GM12878 (cell line): ENCODE measurements at regions of chr11 and their contacts with region 1.

Region 1: DNA sequence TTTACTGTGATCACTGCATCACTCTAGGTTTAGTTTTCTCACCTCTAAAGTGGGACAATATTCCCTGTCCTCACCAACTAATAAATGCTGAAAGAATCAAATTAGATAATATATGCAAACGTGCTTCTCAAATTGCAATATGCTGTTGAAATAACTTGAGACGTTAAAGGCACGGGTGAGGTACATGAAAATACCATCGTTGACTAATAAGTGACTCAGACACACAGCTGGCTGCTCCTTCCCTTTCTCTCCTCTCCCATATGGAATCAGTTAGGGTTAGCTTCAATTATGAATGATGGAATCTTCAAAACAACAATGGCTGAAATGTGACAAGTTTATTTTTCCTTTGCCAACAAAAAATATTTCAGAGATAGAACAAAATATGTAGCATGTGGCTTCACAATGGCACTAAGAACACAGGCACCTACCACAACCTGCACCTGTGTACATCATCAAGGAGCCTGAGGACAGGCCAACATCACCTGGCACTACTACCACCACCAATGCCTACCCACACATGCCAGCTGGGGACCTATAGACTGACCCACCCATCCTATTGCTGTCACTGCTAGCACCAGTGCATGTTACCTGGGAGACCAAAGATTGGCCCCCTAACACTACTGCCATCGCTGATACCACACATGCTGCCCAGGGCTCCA is 13.7 kb downstream of the GDPD4 start:
- DNase-seq: no peak
- ATAC-seq: no peak
- H3K4me3 ChIP-seq: no peak overlapping the region
- H3K27ac ChIP-seq: no peak overlapping the region
- H3K4me1 ChIP-seq: no peaks in the 10 kb centered on the region
- H3K27me3 ChIP-seq: peaks cover 0 to 3% of the 10 kb centered on the region in 2 experiments; a peak in 2 of 4 replicates
- CTCF ChIP-seq: no peak
- EP300 ChIP-seq: no peak
- POLR2A ChIP-seq: no peak
- RAD21 ChIP-seq: no peak

Region 2: GRCh38 chr11:77340501-77340900 is 52.8 kb after region 1 on chr11:
- CTCF ChIA-PET with region 1: no interaction called
- POLR2A ChIA-PET with region 1: no interaction called
- RAD21 ChIA-PET with region 1: no interaction called
- SMC1A ChIA-PET with region 1: no interaction called
- in situ Hi-C with region 1: loop called (anchors 5 kb)
- intact Hi-C with region 1: no loop called
- DNase-seq: no peak
- ATAC-seq: no peak
- H3K4me3 ChIP-seq: no peak overlapping the region
- H3K27ac ChIP-seq: no peak overlapping the region
- H3K4me1 ChIP-seq: no peaks in the 10 kb centered on the region
- H3K27me3 ChIP-seq: no peaks in the 10 kb centered on the region
- CTCF ChIP-seq: no peak
- EP300 ChIP-seq: no peak
- POLR2A ChIP-seq: no peak
- RAD21 ChIP-seq: no peak